Activated CD4-positive, alpha-beta T cell treated with anti-CD3 and anti-CD28 coated beads, Interleukin-2, amount 10 ng/mL, durations not matched to agents 24 days and 14 days (primary cell): ENCODE measurements at regions of chr19 and their contacts with region 1.

Region 1: DNA sequence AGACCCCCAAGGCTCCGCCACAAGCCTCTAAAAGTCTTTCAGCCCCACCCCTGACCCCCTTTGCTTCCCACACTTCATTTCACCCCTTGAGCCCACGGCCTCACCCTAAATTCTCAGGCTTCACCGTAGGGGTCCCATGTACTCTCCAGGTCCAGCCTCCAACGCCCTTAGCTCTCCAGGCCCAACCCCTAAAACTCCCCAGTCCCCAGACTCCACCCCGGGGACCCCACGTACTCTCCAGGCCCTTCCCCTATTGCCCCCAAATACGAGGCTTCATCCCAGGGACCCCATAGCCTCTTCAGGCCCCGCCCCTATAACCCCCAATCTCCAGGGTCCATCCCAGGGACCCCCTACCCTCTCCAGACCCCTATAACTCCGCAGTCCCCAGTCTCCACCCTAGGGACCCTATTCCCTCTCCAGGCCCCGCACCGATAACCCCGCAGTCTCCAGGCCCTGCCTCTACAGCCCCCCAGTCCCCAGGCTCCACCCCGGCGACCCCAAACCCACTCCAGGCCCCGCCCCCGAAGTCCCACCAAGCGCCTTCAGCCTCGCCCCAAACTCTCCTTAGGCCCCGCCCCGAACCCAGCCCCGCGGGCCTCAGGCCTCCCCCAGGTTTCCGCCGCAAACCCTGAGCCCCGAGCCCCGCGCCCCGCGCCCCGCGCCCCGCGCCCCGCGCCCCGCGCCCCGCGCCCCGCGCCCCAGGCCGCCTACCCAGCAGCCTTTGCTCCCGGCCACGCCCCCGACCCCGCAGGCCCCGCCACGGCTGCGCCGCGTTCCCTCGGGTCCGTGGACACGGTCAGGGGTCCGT is 540 bp downstream of the MED16 start:
- DNase-seq: peak; percentile 73
- H3K4me3 Mint-ChIP-seq: peak overlapping the region; percentile 91
- H3K27ac Mint-ChIP-seq: peak overlapping the region; percentile 97
- H3K4me1 Mint-ChIP-seq: peaks cover 17% of the 10 kb centered on the region
- H3K27me3 Mint-ChIP-seq: no peaks in the 10 kb centered on the region

Region 2: GRCh38 chr19:913080-913748 is 20.8 kb after region 1 on chr19 and contains the start of gene R3HDM4:
- intact Hi-C with region 1: loop called (anchors 1 kb)
- DNase-seq: peak; percentile 97
- H3K4me3 Mint-ChIP-seq: peak within 1 kb of the TSS; percentile 85
- H3K27ac Mint-ChIP-seq: peak within 1 kb of the TSS; percentile 89
- H3K4me1 Mint-ChIP-seq: peaks cover 26% of the 10 kb centered on the region
- H3K27me3 Mint-ChIP-seq: peaks cover 2% of the 10 kb centered on the region
- total RNA-seq, gene R3HDM4: 86.8 and 91.5 TPM in 2 replicates